Caco-2 (cell line): ENCODE measurements at regions of chr12 and their contacts with region 1.

Region 1: GRCh38 chr12:10140001-10140400 is 10.0 kb upstream of the CLEC7A start:
- DNase-seq: peak in 1 of 2 experiments; percentile 61
- H3K4me3 ChIP-seq: no peak overlapping the region
- H3K4me3 Mint-ChIP-seq: no peak overlapping the region
- H3K27ac Mint-ChIP-seq: no peak overlapping the region
- H3K4me1 ChIP-seq: no peaks in the 10 kb centered on the region
- H3K4me1 Mint-ChIP-seq: no peaks in the 10 kb centered on the region
- H3K27me3 ChIP-seq: no peaks in the 10 kb centered on the region
- H3K27me3 Mint-ChIP-seq: peaks cover 3% of the 10 kb centered on the region
- CTCF ChIP-seq: peak; percentile 59 to 80

Region 2: DNA sequence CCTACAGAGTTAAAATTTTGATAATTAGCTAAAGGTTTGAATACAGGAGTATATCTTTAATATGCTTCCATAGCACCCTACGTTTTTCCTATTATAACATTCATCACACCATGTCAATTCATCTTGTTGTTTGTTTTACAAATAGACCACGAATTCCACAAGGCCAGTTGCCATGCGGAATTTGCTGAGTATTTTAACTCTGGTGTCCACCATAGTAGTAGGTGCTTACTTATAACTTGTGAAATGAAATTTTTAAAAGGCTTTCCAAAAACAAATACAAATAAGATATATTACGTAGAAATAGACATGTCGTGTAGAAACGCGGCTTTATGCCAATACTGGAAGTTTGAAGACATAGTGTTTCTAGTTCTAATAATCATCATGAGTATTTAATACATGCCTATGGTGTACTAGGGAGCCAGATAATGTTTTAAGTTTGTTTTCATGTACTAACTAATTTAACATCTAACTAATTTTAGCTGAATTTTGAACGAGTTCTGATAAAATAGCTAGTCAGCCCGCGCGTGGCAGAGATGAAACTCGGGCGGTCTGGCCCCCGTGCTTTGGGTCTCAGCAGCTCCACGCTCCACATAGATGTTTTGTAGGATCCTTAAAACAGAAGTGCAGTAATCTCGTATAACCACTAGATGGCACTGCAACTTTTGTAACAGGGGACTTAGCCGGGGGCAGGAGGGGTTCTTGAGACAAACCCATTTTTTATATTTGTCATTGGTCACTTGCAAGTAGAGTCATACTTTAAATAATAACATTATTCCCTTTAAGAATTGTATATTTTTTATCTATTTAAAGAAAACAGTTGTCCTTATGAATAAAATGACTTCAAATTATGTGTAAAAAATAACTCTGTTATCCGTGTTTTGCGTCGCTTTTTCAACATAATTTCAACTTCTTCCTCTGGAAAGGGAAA is 389.5 kb before region 1 on chr12:
- CTCF ChIA-PET with region 1: interaction called, 3 read pairs
- POLR2A ChIA-PET with region 1: no interaction called
- intact Hi-C with region 1: loop called (anchors 1 kb)
- DNase-seq: peak in 1 of 2 experiments; percentile 72
- H3K4me3 ChIP-seq: no peak overlapping the region
- H3K4me3 Mint-ChIP-seq: no peak overlapping the region
- H3K27ac Mint-ChIP-seq: no peak overlapping the region
- H3K4me1 ChIP-seq: no peaks in the 10 kb centered on the region
- H3K4me1 Mint-ChIP-seq: peaks cover 6% of the 10 kb centered on the region
- H3K27me3 ChIP-seq: no peaks in the 10 kb centered on the region
- H3K27me3 Mint-ChIP-seq: peaks cover 12% of the 10 kb centered on the region
- CTCF ChIP-seq: peak; percentile 91 to 96

Region 3: GRCh38 chr12:10012630-10013330 is 127.2 kb before region 1 on chr12:
- CTCF ChIA-PET with region 1: interaction called, 46 read pairs
- POLR2A ChIA-PET with region 1: no interaction called
- intact Hi-C with region 1: loop called (anchors 1 kb)
- DNase-seq: no peak
- H3K4me3 ChIP-seq: no peak overlapping the region
- H3K4me3 Mint-ChIP-seq: no peak overlapping the region
- H3K27ac Mint-ChIP-seq: no peak overlapping the region
- H3K4me1 ChIP-seq: no peaks in the 10 kb centered on the region
- H3K4me1 Mint-ChIP-seq: no peaks in the 10 kb centered on the region
- H3K27me3 ChIP-seq: no peaks in the 10 kb centered on the region
- H3K27me3 Mint-ChIP-seq: peaks cover 22% of the 10 kb centered on the region
- CTCF ChIP-seq: no peak

Region 4: DNA sequence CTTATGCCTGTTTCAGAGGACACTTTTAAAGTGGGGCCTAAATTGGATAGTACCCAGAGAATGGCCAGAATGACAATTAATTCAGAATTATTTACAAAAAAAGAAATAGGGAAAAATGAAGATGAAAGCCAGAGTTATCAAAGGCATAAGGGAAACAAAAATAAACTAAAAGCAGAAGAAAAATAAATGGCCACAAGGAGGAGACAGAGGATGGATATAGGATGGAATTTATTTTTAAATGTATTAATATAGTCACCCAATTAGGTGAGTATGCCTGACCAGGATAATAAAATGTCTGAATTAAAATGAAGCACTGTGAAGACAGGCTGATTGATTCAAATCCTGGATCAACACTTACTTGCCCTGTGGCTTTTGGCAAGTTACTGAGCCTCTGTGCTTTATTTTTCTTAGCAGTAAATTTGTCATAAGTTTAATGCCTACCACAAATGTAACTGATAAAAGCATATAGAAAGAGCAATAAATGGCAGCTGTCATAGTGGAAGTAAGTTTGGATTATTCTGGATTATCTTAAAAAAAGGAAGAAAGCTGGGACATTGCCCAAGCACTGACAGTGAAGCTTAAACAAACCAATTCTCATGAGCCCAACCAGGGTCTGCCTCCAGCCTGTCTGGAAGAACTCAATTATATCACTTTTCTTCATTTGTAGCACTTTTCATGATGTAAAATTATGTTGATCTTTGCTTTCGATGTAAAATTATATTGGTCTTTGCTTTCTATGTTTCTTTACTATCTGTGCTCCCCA is 106.0 kb before region 1 on chr12:
- CTCF ChIA-PET with region 1: interaction called, 10 read pairs
- POLR2A ChIA-PET with region 1: no interaction called
- intact Hi-C with region 1: loop called (anchors 1 kb)
- DNase-seq: no peak
- H3K4me3 ChIP-seq: no peak overlapping the region
- H3K4me3 Mint-ChIP-seq: no peak overlapping the region
- H3K27ac Mint-ChIP-seq: no peak overlapping the region
- H3K4me1 ChIP-seq: no peaks in the 10 kb centered on the region
- H3K4me1 Mint-ChIP-seq: no peaks in the 10 kb centered on the region
- H3K27me3 ChIP-seq: no peaks in the 10 kb centered on the region
- H3K27me3 Mint-ChIP-seq: peaks cover 6% of the 10 kb centered on the region
- CTCF ChIP-seq: peak; percentile 33 to 69